GM13977 (cell line): ENCODE measurements at regions of chr9 and their contacts with region 1.

Region 1: GRCh38 chr9:27701587-27701986 is 128.3 kb upstream of the C9orf72 start:
- DNase-seq: no peak
- CTCF ChIP-seq: no peak

Region 2: GRCh38 chr9:28073270-28073669 is 371.7 kb after region 1 on chr9:
- in situ Hi-C with region 1: loop called (anchors 25 kb)
- DNase-seq: peak; percentile 7
- CTCF ChIP-seq: peak; percentile 46